Ovary (tissue), 10 donors: ENCODE measurements at regions of chr16 and their contacts with region 1.

Region 1: GRCh38 chr16:19912455-19913339 is 28.0 kb upstream of the GPRC5B start:
- DNase-seq: no peak
- H3K4me3 ChIP-seq: no peak overlapping the region
- H3K27ac ChIP-seq: no peak overlapping the region
- H3K4me1 ChIP-seq: no peaks in the 10 kb centered on the region
- H3K27me3 ChIP-seq: no peaks in the 10 kb centered on the region
- CTCF ChIP-seq: no peak
- EP300 ChIP-seq: no peak
- POLR2A ChIP-seq: no peak

Region 2: GRCh38 chr16:20359997-20360396 is 447.3 kb after region 1 on chr16:
- intact Hi-C with region 1: loop called in 1 of 4 experiments (anchors 10 kb)
- DNase-seq: no peak
- H3K4me3 ChIP-seq: no peak overlapping the region
- H3K27ac ChIP-seq: no peak overlapping the region
- H3K4me1 ChIP-seq: no peaks in the 10 kb centered on the region
- H3K27me3 ChIP-seq: no peaks in the 10 kb centered on the region
- CTCF ChIP-seq: no peak
- EP300 ChIP-seq: no peak
- POLR2A ChIP-seq: no peak